SK-N-SH (cell line): ENCODE measurements at regions of chr15 and their contacts with region 1.

Region 1: DNA sequence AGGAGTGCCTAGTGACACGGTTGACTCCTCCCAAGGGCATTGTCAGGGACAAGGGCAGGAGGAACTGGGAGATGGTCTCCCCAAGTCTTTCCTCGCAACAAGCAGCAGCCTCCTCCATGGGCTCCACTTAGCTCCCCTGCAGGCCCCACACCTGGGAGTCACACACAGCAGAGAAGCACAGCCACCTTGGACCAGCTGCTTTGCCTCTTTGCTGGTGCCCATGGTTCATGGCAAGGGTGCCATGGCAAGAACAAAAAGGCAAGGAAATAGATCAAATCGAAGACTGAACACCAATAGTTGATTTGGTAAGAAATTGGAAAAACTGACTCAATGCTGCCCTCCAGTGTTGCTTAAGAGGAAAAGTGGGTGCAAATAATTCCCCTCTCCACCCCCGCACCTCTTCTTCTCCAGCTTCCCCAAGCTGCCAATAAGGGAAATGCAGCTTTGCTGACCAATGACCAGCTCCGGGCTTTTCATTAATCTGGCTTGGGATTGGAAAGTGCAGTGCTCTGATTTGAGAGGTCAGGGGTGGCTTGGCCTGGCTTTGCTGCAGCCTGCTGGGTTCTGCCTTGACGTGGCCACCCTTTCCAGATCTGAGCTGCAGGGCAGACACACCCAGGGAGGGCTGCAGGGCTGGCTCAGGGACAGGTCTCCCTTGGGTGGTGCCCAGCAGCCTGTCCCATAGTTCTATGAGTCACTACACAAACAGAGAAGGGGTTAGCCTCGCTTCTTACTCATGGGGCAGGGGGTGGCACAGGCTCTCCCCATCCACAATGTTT is 162.0 kb downstream of the KLF13 start:
- DNase-seq: peak; percentile 92
- H3K4me3 ChIP-seq: no peak overlapping the region
- H3K27ac ChIP-seq: no peak overlapping the region
- H3K4me1 ChIP-seq: peaks cover 3 to 10% of the 10 kb centered on the region in 2 experiments; a peak in 1 of 4 replicates
- H3K27me3 ChIP-seq: no peaks in the 10 kb centered on the region
- CTCF ChIP-seq: peak; percentile 84
- EP300 ChIP-seq: no peak
- RAD21 ChIP-seq: peak; percentile 89

Region 2: GRCh38 chr15:31200735-31201151 is 287.9 kb before region 1 on chr15:
- CTCF ChIA-PET with region 1: interaction called, 69 read pairs
- POLR2A ChIA-PET with region 1: interaction called, 3 read pairs
- DNase-seq: peak; percentile 59
- H3K4me3 ChIP-seq: 0 out of 4 replicates have a peak overlapping the region, but pooled peaks of 1 of the 2 experiments have one; percentile 19
- H3K27ac ChIP-seq: no peak overlapping the region
- H3K4me1 ChIP-seq: peaks cover 0 to 7% of the 10 kb centered on the region in 2 experiments; a peak in 1 of 4 replicates
- H3K27me3 ChIP-seq: peaks cover 8% of the 10 kb centered on the region; the same call in 1 of the 2 replicates
- CTCF ChIP-seq: no peak
- EP300 ChIP-seq: no peak
- RAD21 ChIP-seq: peak; percentile 71

Region 3: GRCh38 chr15:31215490-31216214 is 273.0 kb before region 1 on chr15:
- CTCF ChIA-PET with region 1: interaction called, 33 read pairs
- POLR2A ChIA-PET with region 1: no interaction called
- DNase-seq: peak; percentile 94
- H3K4me3 ChIP-seq: peak overlapping the region; percentile 55 to 60
- H3K27ac ChIP-seq: peak overlapping the region in 1 of 2 experiments; percentile 72; a peak in 1 of 4 replicates
- H3K4me1 ChIP-seq: peaks cover 0 to 32% of the 10 kb centered on the region in 2 experiments; a peak in 2 of 4 replicates
- H3K27me3 ChIP-seq: no peaks in the 10 kb centered on the region
- CTCF ChIP-seq: peak; percentile 74
- EP300 ChIP-seq: no peak
- RAD21 ChIP-seq: peak; percentile 74

Region 4: GRCh38 chr15:31241888-31242522 is 246.6 kb before region 1 on chr15:
- CTCF ChIA-PET with region 1: no interaction called
- POLR2A ChIA-PET with region 1: no interaction called
- DNase-seq: no peak
- H3K4me3 ChIP-seq: no peak overlapping the region
- H3K27ac ChIP-seq: no peak overlapping the region
- H3K4me1 ChIP-seq: peaks cover 3 to 5% of the 10 kb centered on the region in 2 experiments; a peak in 3 of 4 replicates
- H3K27me3 ChIP-seq: no peaks in the 10 kb centered on the region
- CTCF ChIP-seq: no peak
- EP300 ChIP-seq: no peak
- RAD21 ChIP-seq: no peak

Region 5: DNA sequence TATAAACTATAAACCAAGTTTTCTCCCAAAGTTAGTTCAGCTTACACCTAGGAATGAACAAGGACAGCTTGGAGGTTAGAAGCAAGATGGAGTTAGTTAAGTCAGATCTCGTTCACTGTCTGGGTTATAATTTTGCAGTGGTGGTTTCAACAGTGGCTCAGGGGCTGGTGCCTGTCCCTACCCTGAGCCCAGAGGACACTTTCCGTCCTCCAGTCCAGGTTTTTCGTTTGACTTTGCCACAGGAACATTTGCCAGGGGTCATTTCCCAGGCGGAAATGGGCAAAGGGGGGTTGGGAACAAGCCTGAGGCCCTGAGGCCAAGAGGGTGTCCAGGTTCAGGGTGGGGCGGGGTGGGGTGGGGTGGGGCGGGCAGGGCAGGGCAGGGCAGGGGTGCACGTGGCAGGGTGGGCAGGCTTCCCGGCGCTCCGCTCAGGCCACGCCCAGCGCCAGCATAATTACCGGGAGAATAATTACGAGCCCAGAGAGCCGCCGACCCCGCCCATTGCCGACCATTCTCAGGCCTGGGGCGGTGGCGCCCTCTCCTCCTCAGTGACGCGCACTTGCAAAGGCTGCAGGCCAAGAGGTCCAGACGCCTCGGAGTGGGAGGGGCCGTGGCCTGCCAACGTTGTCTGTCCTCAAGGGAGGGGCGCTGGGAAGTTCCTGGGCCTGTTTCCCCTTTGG is 91.6 kb before region 1 on chr15:
- CTCF ChIA-PET with region 1: interaction called, 26 read pairs
- POLR2A ChIA-PET with region 1: no interaction called
- DNase-seq: peak; percentile 82
- H3K4me3 ChIP-seq: peak overlapping the region in 1 of 2 experiments; percentile 25; a peak in 2 of 4 replicates
- H3K27ac ChIP-seq: peak overlapping the region in 1 of 2 experiments; percentile 98; a peak in 3 of 4 replicates
- H3K4me1 ChIP-seq: peaks cover 3 to 54% of the 10 kb centered on the region in 2 experiments; a peak in 2 of 4 replicates
- H3K27me3 ChIP-seq: no peaks in the 10 kb centered on the region
- CTCF ChIP-seq: no peak
- EP300 ChIP-seq: 0 out of 4 replicates have a peak, but pooled peaks of 1 of the 2 experiments have one; percentile 1
- RAD21 ChIP-seq: peak; percentile 48

Region 6: DNA sequence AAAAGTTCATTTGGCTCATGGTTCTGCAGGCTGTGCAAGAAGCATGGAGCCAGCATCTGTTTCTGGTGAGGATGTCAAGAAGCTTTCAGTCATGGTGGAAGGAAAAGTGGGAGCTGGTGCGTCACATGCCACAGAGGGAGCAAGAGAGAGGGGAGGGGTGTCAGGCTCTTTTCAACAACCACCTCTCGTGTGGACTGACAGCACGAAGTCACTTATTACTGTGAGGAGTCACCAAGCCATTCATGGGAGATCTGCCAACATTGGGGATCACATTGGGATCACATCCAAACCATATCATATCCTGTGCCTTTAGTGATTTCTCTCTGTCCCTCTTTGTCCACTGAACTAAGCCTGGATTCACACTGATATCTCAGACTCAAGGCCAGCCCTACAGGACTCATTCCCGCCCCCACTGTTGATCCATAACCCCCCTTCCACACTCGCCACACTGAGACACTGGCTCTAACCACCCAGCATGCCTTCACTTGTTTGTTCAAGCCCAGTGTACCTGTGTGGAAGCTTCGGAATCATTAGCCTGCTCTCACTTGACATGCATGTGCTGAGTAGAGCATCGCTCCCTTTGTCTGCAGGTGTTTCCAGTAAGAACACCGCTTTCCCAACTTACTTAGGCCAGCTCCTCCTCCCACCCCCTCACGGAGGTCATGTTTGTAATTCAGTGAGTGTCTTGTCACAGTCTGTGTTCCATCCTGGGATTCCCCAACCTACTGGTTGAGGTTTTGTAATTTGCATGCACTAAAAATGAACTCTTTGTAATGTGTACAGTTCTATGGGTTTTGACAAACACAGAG is 29.8 kb before region 1 on chr15:
- CTCF ChIA-PET with region 1: interaction called, 15 read pairs
- POLR2A ChIA-PET with region 1: no interaction called
- DNase-seq: no peak
- H3K4me3 ChIP-seq: no peak overlapping the region
- H3K27ac ChIP-seq: no peak overlapping the region
- H3K4me1 ChIP-seq: no peaks in the 10 kb centered on the region
- H3K27me3 ChIP-seq: no peaks in the 10 kb centered on the region
- CTCF ChIP-seq: no peak
- EP300 ChIP-seq: no peak
- RAD21 ChIP-seq: no peak

Region 7: GRCh38 chr15:31472636-31473384 is 15.8 kb before region 1 on chr15:
- CTCF ChIA-PET with region 1: interaction called, 88 read pairs
- POLR2A ChIA-PET with region 1: no interaction called
- DNase-seq: no peak
- H3K4me3 ChIP-seq: no peak overlapping the region
- H3K27ac ChIP-seq: no peak overlapping the region
- H3K4me1 ChIP-seq: peaks cover 0 to 11% of the 10 kb centered on the region in 2 experiments; a peak in 1 of 4 replicates
- H3K27me3 ChIP-seq: peaks cover 5% of the 10 kb centered on the region; the same call in 1 of the 2 replicates
- CTCF ChIP-seq: no peak
- EP300 ChIP-seq: no peak
- RAD21 ChIP-seq: no peak